Posterior cingulate gyrus (tissue), 11 donors: ENCODE measurements at regions of chr1 and their contacts with region 1.

Region 1: DNA sequence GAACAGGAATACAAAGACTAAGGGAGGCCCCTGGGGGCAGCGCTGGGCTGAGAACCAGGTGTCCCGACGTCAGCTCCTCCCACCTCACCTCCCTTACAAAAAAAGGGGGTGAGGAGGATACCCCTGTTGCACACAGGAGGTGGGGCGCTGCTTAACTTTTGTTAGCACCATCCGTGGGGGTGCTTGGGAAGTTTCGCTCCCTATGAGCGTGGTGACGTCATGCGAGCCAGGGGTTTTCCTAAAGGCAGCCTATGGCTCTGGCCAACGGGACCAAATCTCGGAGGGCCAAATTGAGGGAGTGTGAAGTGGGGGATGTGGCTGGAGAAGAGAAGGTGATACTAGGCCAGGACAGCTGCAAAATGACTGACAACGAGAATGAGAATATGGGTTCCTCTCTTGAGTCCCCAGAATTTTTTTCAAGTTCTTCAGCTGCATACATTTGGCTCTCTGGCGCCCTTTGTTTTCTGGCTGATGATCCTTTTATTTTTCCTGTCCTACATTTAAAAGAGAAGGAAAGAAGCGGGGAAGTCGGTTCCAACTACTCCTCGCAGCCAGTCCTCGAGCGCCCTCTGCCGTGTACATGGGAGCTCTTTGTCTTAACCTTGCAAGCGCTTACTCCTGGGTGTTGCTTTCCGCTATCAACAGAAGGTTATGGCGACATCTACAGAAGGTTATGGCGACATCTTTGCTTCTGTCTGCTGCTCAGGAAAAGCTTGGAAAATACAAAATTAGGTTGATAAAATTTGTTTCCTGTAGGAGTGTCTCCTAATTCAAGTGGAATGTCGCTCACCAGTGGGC is 48.0 kb upstream of the ZC3H11B start:
- DNase-seq: peak; percentile 80 to 98 (median 94)

Region 2: GRCh38 chr1:218345673-218346390 is 1315.0 kb before region 1 on chr1:
- intact Hi-C with region 1: loop called (anchors 5 kb)
- DNase-seq: peak; percentile 28 to 92 (median 60)

Region 3: GRCh38 chr1:219566951-219567947 is 93.6 kb before region 1 on chr1:
- intact Hi-C with region 1: loop called (anchors 2 kb)
- DNase-seq: no peak

Region 4: DNA sequence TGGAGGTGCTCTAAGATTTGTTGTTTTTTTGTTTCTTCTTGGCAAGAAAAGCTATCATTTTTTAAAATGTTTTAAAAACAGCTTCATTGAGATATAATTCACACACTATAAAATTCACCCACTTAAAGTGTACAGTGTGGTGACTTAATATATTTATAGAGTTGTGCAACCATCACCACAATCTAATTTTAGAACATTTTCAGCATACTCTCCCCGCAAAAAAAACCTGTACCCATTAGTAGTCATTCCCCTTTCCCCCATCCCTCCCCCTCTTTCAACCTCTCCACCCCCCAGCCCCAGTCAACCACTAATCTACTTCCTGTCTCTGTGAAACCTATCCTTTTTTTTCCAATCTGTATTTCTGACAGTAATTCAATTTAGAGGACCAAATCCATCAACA is 78.6 kb before region 1 on chr1:
- intact Hi-C with region 1: no loop called
- DNase-seq: no peak

Region 5: GRCh38 chr1:219732814-219733491 is 72.1 kb after region 1 on chr1:
- intact Hi-C with region 1: no loop called
- DNase-seq: no peak

Region 6: GRCh38 chr1:219812491-219813203 is 151.8 kb after region 1 on chr1:
- intact Hi-C with region 1: loop called (anchors 5 kb)
- DNase-seq: peak in 5 of 10 donors; percentile 9 to 51 (median 32)